ENCODE measurements at regions of chr7 and their contacts with region 1.

Region 1: DNA sequence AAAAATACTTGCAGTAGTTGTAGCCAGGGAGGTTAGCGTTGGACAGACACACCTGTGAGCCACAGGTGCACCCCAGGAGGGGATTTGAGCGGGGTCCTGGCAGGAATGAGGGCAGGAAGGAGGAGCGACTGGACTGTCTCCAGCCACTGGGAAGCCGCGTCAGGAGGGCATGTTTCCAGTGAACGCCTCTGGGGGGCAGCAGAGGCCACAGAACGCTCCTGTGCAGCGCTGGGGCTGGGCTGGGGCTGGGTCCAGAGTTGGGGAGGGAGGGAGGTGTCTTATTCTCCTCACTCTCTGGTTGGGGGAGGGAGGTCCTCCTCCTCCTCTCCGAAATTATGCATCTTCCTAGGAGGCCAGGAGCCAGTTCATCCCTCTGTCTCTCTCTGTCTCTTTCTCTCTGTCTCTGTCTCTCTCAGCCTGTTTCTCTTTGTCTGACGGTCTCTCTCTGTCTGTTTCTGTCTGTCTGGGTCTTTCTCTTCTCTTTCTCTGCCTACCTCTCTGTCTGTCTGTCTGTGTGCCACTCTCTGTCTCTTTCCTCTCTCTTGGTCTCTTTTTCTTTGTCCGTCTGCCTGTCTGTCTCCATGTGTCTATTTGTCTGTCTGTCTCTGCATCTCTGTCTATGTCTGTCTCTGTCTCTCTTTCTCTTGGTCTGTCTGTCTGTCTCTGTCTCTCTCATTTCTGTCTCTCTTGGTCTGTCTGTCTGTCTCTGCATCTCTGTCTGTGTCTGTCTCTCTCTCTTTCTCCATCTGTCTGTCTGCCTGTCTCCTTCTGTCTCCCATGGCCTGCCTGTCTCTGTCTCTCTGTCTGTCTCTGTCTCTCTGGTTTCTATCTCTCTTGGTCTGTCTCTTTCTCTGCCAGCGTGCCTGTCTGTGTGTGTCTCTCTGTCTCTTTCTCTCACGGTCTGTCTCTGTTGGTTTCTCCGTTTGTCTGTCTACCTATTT is 9.9 kb upstream of the PSMG3 start:
- DNase-seq: peak; percentile 66
- H3K4me3 ChIP-seq: no peak overlapping the region
- H3K27ac ChIP-seq: no peak overlapping the region
- H3K4me1 ChIP-seq: no peaks in the 10 kb centered on the region
- CTCF ChIP-seq: peak; percentile 86

Region 2: DNA sequence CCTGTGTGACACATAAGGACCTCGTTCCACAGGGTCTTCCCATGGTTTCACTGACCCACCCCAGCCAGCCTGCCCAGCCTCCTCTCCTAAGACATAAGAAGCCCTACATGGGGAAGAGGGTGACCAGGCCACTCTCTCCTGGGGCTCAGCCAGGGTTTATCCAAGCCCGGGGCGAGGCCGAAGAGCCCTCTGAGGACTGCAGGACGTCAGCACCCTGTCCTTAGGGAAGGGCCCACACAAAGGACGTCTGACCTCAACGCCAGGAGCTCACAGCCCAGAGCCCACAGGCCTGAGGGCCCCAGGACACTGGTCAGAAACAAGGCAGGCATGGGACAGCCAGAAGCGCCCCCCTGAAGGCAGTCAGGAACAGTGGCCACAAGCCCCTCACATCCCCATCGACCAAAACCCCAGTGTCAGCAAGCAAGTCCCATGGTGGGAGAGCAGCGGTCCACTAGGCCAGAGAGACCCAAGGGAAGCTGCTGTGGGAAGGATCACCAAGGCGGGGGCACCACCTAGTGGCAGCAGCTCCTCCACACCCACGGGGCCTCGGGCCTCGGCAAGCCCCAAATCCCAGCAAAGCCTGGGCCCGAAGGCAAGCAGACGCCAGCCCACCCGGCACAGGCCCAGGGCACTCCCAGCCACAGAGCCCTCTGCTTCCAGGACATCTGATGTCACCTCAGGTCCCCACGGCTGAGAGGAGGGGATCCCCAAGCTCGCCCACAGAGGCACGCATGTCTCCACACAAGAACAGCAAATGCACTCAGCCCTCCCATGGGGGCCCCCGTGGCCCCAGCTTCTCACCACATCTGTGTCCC is 629.6 kb after region 1 on chr7:
- CTCF ChIA-PET with region 1: no interaction called
- POLR2A ChIA-PET with region 1: no interaction called
- intact Hi-C with region 1: loop called (anchors 5 kb)
- DNase-seq: peak; percentile 67
- H3K4me3 ChIP-seq: no peak overlapping the region
- H3K27ac ChIP-seq: no peak overlapping the region
- H3K4me1 ChIP-seq: peaks cover under 1% of the 10 kb centered on the region
- CTCF ChIP-seq: peak; percentile 78

Measured in OCI-LY7 (cell line).